CD8-positive, alpha-beta T cell (primary cell): ENCODE measurements at regions of chrX and their contacts with region 1.

Region 1: GRCh38 chrX:109709129-109709631 is 23.9 kb downstream of the ACSL4 start:
- DNase-seq: peak in 2 of 9 experiments; percentile 3 to 32
- ATAC-seq: peak; percentile 20
- H3K4me3 ChIP-seq: no peak overlapping the region
- H3K4me3 Mint-ChIP-seq: peak overlapping the region; percentile 58
- H3K27ac ChIP-seq: peak overlapping the region in 1 of 2 experiments; percentile 45
- H3K27ac Mint-ChIP-seq: peak overlapping the region; percentile 67
- H3K4me1 ChIP-seq: peaks cover 19% of the 10 kb centered on the region
- H3K4me1 Mint-ChIP-seq: peaks cover 63% of the 10 kb centered on the region
- H3K27me3 ChIP-seq: no peaks in the 10 kb centered on the region
- H3K27me3 Mint-ChIP-seq: no peaks in the 10 kb centered on the region
- CTCF ChIP-seq: no peak

Region 2: DNA sequence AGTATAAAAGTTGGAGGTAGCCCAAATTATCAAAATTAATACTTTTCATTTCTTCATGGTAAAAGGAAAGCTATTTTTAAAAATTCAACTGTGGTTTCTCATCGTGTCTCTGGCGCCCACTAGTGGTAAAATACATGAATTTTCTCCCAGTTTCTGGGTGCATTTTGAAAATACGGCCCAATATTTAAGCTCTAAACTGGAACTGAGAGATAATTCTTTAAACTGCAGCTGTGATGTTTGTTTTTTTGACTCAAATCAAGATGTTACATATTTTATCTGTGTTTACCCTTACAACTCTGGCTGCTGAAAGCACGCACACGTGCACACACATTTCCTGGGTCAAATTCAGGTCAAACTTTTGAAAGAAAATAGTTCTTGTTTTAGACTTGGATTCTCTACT is 147.8 kb after region 1 on chrX:
- CTCF ChIA-PET with region 1: interaction called, 58 read pairs
- POLR2A ChIA-PET with region 1: interaction called, 3 read pairs
- intact Hi-C with region 1: loop called (anchors 1 kb)
- DNase-seq: peak in 3 of 9 experiments; percentile 11 to 56 (median 43)
- ATAC-seq: no peak
- H3K4me3 ChIP-seq: no peak overlapping the region
- H3K4me3 Mint-ChIP-seq: no peak overlapping the region
- H3K27ac ChIP-seq: no peak overlapping the region
- H3K27ac Mint-ChIP-seq: no peak overlapping the region
- H3K4me1 ChIP-seq: no peaks in the 10 kb centered on the region
- H3K4me1 Mint-ChIP-seq: no peaks in the 10 kb centered on the region
- H3K27me3 ChIP-seq: no peaks in the 10 kb centered on the region
- H3K27me3 Mint-ChIP-seq: no peaks in the 10 kb centered on the region
- CTCF ChIP-seq: peak; percentile 72